CD4-positive, alpha-beta memory T cell (primary cell): ENCODE measurements at regions of chr7 and their contacts with region 1.

Region 1: GRCh38 chr7:121395961-121396757 is at the start of gene FAM3C:
- DNase-seq: peak; percentile 69 to 83 (median 72)
- H3K4me3 ChIP-seq: peak within 1 kb of the TSS in 1 of 2 donors; percentile 60
- H3K4me3 Mint-ChIP-seq: peak within 1 kb of the TSS; percentile 87 to 92 (median 88)
- H3K27ac ChIP-seq: peak within 1 kb of the TSS; percentile 62
- H3K27ac Mint-ChIP-seq: peak within 1 kb of the TSS; percentile 61 to 90 (median 88)
- H3K4me1 ChIP-seq: peaks cover 13% of the 10 kb centered on the region
- H3K4me1 Mint-ChIP-seq: peaks cover 12 to 38% (median 20%) of the 10 kb centered on the region in 4 donors
- H3K27me3 ChIP-seq: no peaks in the 10 kb centered on the region
- H3K27me3 Mint-ChIP-seq: no peaks in the 10 kb centered on the region
- total RNA-seq, gene FAM3C: 19.9 to 20.9 TPM

Region 2: GRCh38 chr7:120987683-120988590 is 408.2 kb before region 1 on chr7:
- CTCF ChIA-PET with region 1: no interaction called
- POLR2A ChIA-PET with region 1: no interaction called
- intact Hi-C with region 1: loop called (anchors 10 kb)
- DNase-seq: peak; percentile 81 to 88 (median 86)
- H3K4me3 ChIP-seq: peak overlapping the region in 1 of 2 donors; percentile 22
- H3K4me3 Mint-ChIP-seq: peak overlapping the region; percentile 61 to 82 (median 75)
- H3K27ac ChIP-seq: no peak overlapping the region
- H3K27ac Mint-ChIP-seq: peak overlapping the region in 1 of 7 donors; percentile 15
- H3K4me1 ChIP-seq: peaks cover 15% of the 10 kb centered on the region
- H3K4me1 Mint-ChIP-seq: peaks cover 13 to 20% (median 15%) of the 10 kb centered on the region in 4 donors
- H3K27me3 ChIP-seq: peaks cover 39% of the 10 kb centered on the region
- H3K27me3 Mint-ChIP-seq: peaks cover 30 to 34% of the 10 kb centered on the region in 2 donors

Region 3: GRCh38 chr7:121379930-121380329 is 16.2 kb before region 1 on chr7:
- CTCF ChIA-PET with region 1: interaction called, 78 read pairs
- POLR2A ChIA-PET with region 1: interaction called, 3 read pairs
- intact Hi-C with region 1: no loop called
- DNase-seq: no peak
- H3K4me3 ChIP-seq: no peak overlapping the region
- H3K4me3 Mint-ChIP-seq: no peak overlapping the region
- H3K27ac ChIP-seq: no peak overlapping the region
- H3K27ac Mint-ChIP-seq: peak overlapping the region in 2 of 7 donors; percentile 41 to 65
- H3K4me1 ChIP-seq: peaks cover 21% of the 10 kb centered on the region
- H3K4me1 Mint-ChIP-seq: peaks cover 16 to 25% (median 22%) of the 10 kb centered on the region in 4 donors
- H3K27me3 ChIP-seq: no peaks in the 10 kb centered on the region
- H3K27me3 Mint-ChIP-seq: no peaks in the 10 kb centered on the region

Region 4: GRCh38 chr7:121410829-121411596 is 14.9 kb after region 1 on chr7:
- CTCF ChIA-PET with region 1: interaction called, 17 read pairs
- POLR2A ChIA-PET with region 1: no interaction called
- intact Hi-C with region 1: no loop called
- DNase-seq: no peak
- H3K4me3 ChIP-seq: no peak overlapping the region
- H3K4me3 Mint-ChIP-seq: no peak overlapping the region
- H3K27ac ChIP-seq: no peak overlapping the region
- H3K27ac Mint-ChIP-seq: no peak overlapping the region
- H3K4me1 ChIP-seq: no peaks in the 10 kb centered on the region
- H3K4me1 Mint-ChIP-seq: peaks cover 0 to 3% (median 0%) of the 10 kb centered on the region in 4 donors
- H3K27me3 ChIP-seq: peaks cover 5% of the 10 kb centered on the region
- H3K27me3 Mint-ChIP-seq: peaks cover 4 to 13% of the 10 kb centered on the region in 2 donors

Region 5: GRCh38 chr7:121437456-121438127 is 41.4 kb after region 1 on chr7:
- CTCF ChIA-PET with region 1: interaction called, 55 read pairs
- POLR2A ChIA-PET with region 1: interaction called, 25 read pairs
- intact Hi-C with region 1: loop called (anchors 1 kb)
- DNase-seq: no peak
- H3K4me3 ChIP-seq: peak overlapping the region in 1 of 2 donors; percentile 38
- H3K4me3 Mint-ChIP-seq: peak overlapping the region; percentile 69 to 88 (median 78)
- H3K27ac ChIP-seq: peak overlapping the region; percentile 30
- H3K27ac Mint-ChIP-seq: peak overlapping the region; percentile 73 to 95 (median 93)
- H3K4me1 ChIP-seq: peaks cover 29% of the 10 kb centered on the region
- H3K4me1 Mint-ChIP-seq: peaks cover 21 to 46% (median 37%) of the 10 kb centered on the region in 4 donors
- H3K27me3 ChIP-seq: no peaks in the 10 kb centered on the region
- H3K27me3 Mint-ChIP-seq: no peaks in the 10 kb centered on the region

Region 6: DNA sequence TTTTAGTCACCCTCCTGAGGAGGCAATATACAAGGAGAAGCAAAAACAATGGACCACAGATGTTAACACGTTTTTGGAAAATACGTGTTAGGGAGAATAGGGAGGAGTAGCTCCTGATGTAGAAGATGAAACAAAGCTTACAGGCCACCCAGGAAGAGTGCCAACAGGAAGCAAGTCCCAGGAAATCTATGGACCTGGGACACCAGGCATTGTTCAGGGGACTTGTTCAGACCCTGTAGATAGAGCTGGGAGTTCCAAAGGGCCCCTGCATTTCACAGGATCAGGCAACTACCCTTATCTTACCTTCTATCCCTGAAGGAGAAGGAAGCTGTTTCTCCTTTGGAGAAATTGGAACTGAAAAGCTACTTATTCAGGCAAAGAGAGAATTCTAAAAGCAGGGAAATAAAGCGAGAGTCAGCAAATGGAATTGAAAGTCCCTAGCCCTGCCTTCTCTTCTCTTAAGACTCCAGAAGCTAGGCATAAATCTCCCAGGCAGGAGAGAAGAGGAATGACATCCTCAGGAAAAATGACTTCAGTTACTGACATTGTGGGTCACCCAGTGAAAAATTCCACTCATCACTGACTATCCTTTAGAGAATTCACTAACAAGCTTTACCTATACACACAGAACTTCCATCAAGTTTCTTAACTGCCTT is 77.6 kb after region 1 on chr7:
- CTCF ChIA-PET with region 1: interaction called, 11 read pairs
- POLR2A ChIA-PET with region 1: interaction called, 3 read pairs
- intact Hi-C with region 1: no loop called
- DNase-seq: no peak
- H3K4me3 ChIP-seq: no peak overlapping the region
- H3K4me3 Mint-ChIP-seq: no peak overlapping the region
- H3K27ac ChIP-seq: no peak overlapping the region
- H3K27ac Mint-ChIP-seq: no peak overlapping the region
- H3K4me1 ChIP-seq: no peaks in the 10 kb centered on the region
- H3K4me1 Mint-ChIP-seq: no peaks in the 10 kb centered on the region
- H3K27me3 ChIP-seq: no peaks in the 10 kb centered on the region
- H3K27me3 Mint-ChIP-seq: peaks cover 0 to 2% of the 10 kb centered on the region in 2 donors

Region 7: GRCh38 chr7:121901026-121901425 is 504.9 kb after region 1 on chr7:
- CTCF ChIA-PET with region 1: no interaction called
- POLR2A ChIA-PET with region 1: no interaction called
- intact Hi-C with region 1: no loop called
- DNase-seq: no peak
- H3K4me3 ChIP-seq: no peak overlapping the region
- H3K4me3 Mint-ChIP-seq: no peak overlapping the region
- H3K27ac ChIP-seq: no peak overlapping the region
- H3K27ac Mint-ChIP-seq: no peak overlapping the region
- H3K4me1 ChIP-seq: no peaks in the 10 kb centered on the region
- H3K4me1 Mint-ChIP-seq: no peaks in the 10 kb centered on the region
- H3K27me3 ChIP-seq: no peaks in the 10 kb centered on the region
- H3K27me3 Mint-ChIP-seq: no peaks in the 10 kb centered on the region